Activated CD8-positive, alpha-beta T cell treated with anti-CD3 and anti-CD28 coated beads for 36 hours (primary cell): ENCODE measurements at regions of chr3 and their contacts with region 1.

Region 1: DNA sequence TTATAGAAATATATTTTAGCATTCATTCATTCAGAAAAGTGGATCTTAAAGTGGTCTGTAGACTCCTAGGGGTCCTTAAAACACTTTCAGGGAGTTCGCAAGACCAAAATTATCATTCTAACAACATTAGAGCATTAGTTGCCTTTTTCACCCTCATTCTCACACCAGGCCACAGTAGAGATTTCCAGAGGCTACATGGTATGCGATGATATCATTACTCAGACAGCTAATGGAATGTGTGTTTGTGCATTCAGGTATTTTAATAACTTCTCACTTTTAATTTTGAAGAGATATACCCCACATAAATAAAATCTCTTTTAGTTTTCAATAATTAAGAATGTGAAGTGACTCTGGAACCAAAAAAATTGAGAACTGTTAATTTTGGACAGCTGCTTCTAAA is 206.9 kb downstream of the NSUN3 start:
- DNase-seq: no peak
- ATAC-seq: no peak
- H3K4me3 Mint-ChIP-seq: no peak overlapping the region
- H3K27ac Mint-ChIP-seq: no peak overlapping the region
- H3K4me1 Mint-ChIP-seq: no peaks in the 10 kb centered on the region
- H3K27me3 Mint-ChIP-seq: peaks cover 2% of the 10 kb centered on the region
- CTCF ChIP-seq: no peak

Region 2: GRCh38 chr3:94249585-94249984 is 20.2 kb before region 1 on chr3:
- CTCF ChIA-PET with region 1: interaction called, 10 read pairs
- POLR2A ChIA-PET with region 1: no interaction called
- intact Hi-C with region 1: no loop called
- DNase-seq: peak; percentile 78
- ATAC-seq: peak; percentile 42
- H3K4me3 Mint-ChIP-seq: no peak overlapping the region
- H3K27ac Mint-ChIP-seq: no peak overlapping the region
- H3K4me1 Mint-ChIP-seq: no peaks in the 10 kb centered on the region
- H3K27me3 Mint-ChIP-seq: peaks cover 6% of the 10 kb centered on the region
- CTCF ChIP-seq: peak; percentile 84